ENCODE measurements at regions of chr2 and their contacts with region 1.

Region 1: DNA sequence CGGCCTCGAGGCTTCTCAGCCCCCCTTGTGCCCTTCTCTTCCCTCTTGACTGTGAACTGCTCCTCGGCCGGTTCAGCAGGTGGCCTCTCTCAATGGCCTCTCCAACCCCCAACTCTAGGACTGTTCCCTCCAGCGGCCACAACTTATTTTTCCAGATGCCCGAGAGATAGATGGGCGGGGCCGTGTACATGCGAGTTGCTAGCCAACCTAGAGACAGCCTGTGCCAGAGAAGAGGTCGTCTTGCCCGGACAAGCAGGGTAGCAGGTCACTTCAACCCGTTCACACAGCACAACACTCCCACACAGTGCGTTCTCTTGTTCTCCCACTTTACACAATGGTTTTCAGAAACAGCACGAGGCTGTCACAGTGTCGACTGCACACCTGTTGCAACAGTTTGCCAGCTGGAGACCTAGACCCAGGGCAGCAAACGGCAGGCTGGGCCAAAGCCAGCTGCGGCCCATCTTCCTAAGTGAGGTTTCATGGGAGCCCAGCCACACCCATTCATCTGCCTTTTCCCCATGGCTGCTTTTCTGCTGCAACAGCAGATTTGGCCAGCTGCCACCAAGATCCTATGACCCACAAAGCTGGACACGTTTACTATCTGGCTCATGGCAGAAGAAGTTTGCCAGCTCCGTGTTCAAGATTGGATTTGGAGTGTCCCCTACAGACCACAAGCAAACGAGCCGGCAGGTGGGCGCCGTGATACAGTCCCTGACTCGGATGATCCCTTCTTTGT is 7.3 kb upstream of the PRLH start:
- DNase-seq: peak; percentile 60
- H3K4me3 ChIP-seq: no peak overlapping the region
- H3K27ac ChIP-seq: no peak overlapping the region
- H3K4me1 ChIP-seq: peaks cover 10% of the 10 kb centered on the region
- H3K27me3 ChIP-seq: no peaks in the 10 kb centered on the region
- CTCF ChIP-seq: peak in 1 of 2 donors; percentile 25

Region 2: DNA sequence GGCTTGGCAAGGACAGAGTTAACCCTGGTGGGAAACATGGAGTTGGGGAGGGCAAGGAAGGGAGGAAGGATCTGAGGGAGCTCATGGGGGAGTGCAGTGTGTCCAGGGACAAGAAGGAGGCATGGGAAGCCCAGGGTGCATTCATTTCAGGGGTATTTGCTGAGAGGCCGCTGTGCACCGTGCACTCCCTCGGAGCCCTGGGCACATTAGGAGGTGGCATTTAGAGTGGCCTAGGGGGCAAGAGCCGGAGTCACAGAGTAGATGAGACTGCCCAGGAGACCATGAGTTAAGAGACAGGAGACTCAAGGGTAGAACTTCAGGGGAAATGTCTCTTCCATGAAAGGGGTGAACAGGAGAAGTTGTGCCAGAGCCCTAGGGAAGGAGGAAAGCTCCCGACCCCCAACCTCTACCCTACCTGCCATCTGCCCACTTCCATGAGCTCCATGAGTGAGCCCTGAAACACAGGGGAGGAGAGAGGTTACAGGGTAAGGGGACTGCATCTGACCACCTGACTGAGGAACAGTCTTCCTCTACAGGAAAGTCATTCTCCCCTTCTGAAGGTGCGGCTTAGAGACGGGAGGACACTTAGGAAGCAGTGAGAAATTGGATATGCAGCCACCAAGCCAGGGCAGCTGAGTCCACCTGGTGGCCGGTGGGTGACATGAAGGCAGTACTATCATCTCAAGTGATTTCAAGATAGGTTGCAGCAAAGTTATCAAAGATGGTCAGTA is 531.9 kb before region 1 on chr2:
- CTCF ChIA-PET with region 1: no interaction called
- dilution Hi-C with region 1: no loop called
- in situ Hi-C with region 1: no loop called
- intact Hi-C with region 1: no loop called
- DNase-seq: peak; percentile 57
- H3K4me3 ChIP-seq: no peak overlapping the region
- H3K27ac ChIP-seq: no peak overlapping the region
- H3K4me1 ChIP-seq: peaks cover 10% of the 10 kb centered on the region
- H3K27me3 ChIP-seq: no peaks in the 10 kb centered on the region
- CTCF ChIP-seq: peak; percentile 93 to 96

Region 3: GRCh38 chr2:237171396-237171795 is 387.7 kb before region 1 on chr2:
- CTCF ChIA-PET with region 1: no interaction called
- dilution Hi-C with region 1: no loop called
- in situ Hi-C with region 1: loop called (anchors 25 kb)
- intact Hi-C with region 1: loop called (anchors 5 kb)
- DNase-seq: peak; percentile 63
- H3K4me3 ChIP-seq: no peak overlapping the region
- H3K27ac ChIP-seq: no peak overlapping the region
- H3K4me1 ChIP-seq: peaks cover 2% of the 10 kb centered on the region
- H3K27me3 ChIP-seq: no peaks in the 10 kb centered on the region
- CTCF ChIP-seq: peak; percentile 22 to 44

Region 4: DNA sequence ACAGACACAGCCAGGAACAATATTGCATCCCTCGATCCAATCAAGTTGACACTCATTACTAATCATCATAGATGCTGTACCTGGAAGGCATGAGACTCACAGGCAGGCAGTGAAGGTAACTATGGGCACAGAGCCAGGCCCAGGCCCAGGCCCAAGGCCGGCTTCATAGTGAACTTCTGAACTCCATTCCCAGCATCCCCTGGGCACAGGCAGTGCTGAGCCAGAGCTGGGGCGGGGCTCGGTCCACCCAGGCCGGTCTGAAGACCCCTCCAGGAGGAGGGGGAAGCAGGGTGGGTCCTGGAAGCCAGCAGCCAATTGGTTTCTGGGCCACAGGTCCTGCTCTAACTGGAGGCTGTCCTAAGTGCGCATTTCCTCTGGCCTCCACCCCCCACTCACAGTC is 34.4 kb before region 1 on chr2:
- CTCF ChIA-PET with region 1: no interaction called
- dilution Hi-C with region 1: no loop called
- in situ Hi-C with region 1: no loop called
- intact Hi-C with region 1: no loop called
- DNase-seq: no peak
- H3K4me3 ChIP-seq: no peak overlapping the region
- H3K27ac ChIP-seq: no peak overlapping the region
- H3K4me1 ChIP-seq: no peaks in the 10 kb centered on the region
- H3K27me3 ChIP-seq: no peaks in the 10 kb centered on the region
- CTCF ChIP-seq: no peak

Measured in mammary epithelial cell (primary cell).